ENCODE measurements at regions of chr19 and their contacts with region 1.

Region 1: GRCh38 chr19:58572818-58573657 is at the start of gene MZF1:
- DNase-seq: peak; percentile 98
- ATAC-seq: peak; percentile 82
- H3K4me3 ChIP-seq: peak within 1 kb of the TSS; percentile 64 to 89
- H3K27ac ChIP-seq: peak within 1 kb of the TSS; percentile 90
- H3K4me1 ChIP-seq: peaks cover 7% of the 10 kb centered on the region
- H3K27me3 ChIP-seq: no peaks in the 10 kb centered on the region
- CTCF ChIP-seq: no peak
- total RNA-seq, gene MZF1: 25.9 TPM

Region 2: DNA sequence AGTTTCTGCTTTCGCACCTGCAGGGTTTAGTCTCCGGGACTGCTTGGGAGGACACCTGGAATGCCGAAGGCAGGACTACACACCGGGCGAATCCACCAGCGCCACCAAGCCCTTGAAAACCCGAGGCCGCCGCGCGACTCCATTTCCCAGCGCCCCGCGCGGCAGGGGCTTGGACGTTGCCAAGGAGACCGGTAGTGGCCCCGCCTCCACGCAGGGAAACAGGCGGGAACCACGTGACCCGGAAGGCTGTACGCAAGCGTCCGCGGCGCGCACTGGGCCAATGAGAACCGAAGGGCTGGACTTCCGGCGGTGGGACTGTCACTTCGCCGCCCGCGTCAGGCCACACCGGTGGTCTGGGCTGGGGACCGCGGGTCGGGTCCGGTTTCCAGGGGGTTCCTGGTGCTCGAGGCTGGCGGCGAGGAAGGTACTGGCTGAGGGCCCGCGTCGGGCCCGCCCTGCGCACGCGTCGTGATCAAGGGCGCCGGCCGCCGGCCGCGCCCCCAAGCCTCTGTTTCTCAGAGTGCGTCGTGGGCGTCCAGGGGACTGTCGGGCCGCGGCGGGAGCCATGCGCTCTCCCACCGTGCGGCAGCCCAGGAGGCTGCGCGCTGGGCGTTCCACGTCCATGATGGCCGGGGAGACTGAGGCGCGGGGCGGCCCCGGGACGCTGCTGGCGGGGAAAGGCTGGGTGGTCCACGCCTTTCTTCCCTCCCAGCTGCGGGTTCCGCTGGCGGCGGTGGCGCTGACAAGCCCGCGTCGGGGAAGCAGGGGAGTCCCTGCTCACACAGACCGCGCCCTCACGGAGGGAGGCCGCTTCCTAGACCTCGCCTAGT is 106.1 kb before region 1 on chr19 and contains the start of gene ZNF324:
- CTCF ChIA-PET with region 1: no interaction called
- POLR2A ChIA-PET with region 1: interaction called, 10 read pairs
- in situ Hi-C with region 1: no loop called
- intact Hi-C with region 1: no loop called
- DNase-seq: peak; percentile 71
- ATAC-seq: peak; percentile 98
- H3K4me3 ChIP-seq: peak within 1 kb of the TSS; percentile 73 to 93
- H3K27ac ChIP-seq: peak within 1 kb of the TSS; percentile 72
- H3K4me1 ChIP-seq: peaks cover 2% of the 10 kb centered on the region; the same call in 1 of the 2 replicates
- H3K27me3 ChIP-seq: no peaks in the 10 kb centered on the region
- CTCF ChIP-seq: no peak
- total RNA-seq, gene ZNF324: 12.8 TPM